B cell (primary cell): ENCODE measurements at regions of chr14 and their contacts with region 1.

Region 1: DNA sequence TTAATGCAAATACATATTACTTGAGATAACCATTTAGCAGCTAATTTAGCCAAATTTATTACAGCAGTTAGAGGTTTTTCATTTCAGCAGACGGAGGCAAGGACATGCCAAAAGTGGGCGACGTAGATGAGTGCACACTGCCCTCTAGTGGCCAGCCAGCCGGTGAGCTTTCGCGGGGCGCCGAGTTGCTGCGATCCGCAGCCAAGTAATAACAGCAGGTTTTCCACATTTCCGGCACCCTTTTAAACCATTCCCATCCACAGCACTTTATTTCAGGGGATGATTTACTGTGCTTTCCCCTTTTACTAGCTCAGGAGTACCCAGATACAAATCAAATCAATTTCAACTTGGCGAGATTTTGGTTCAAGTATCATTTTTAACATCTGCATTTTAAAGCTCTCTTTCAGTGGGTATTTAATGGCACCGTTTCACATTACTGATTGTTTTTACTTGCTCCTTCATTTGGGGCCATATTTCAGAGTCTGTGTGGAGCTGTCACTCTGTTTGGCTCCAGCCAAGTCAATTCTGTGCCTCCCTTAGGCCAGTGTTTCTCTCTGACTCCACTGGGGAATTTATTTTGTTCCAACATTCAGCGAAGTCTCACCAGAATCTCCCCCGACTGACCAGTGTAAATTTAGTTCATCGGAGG is 158.0 kb downstream of the EGLN3 start:
- DNase-seq: peak; percentile 53
- ATAC-seq: no peak
- H3K4me3 ChIP-seq: no peak overlapping the region
- H3K4me3 Mint-ChIP-seq: peak overlapping the region; percentile 21
- H3K27ac ChIP-seq: no peak overlapping the region
- H3K27ac Mint-ChIP-seq: no peak overlapping the region
- H3K4me1 ChIP-seq: peaks cover 4 to 8% of the 10 kb centered on the region in 2 donors
- H3K4me1 Mint-ChIP-seq: peaks cover 6% of the 10 kb centered on the region
- H3K27me3 ChIP-seq: peaks cover 0 to 20% (median 6%) of the 10 kb centered on the region in 4 experiments
- H3K27me3 Mint-ChIP-seq: peaks cover 36% of the 10 kb centered on the region
- CTCF ChIP-seq: peak; percentile 79

Region 2: DNA sequence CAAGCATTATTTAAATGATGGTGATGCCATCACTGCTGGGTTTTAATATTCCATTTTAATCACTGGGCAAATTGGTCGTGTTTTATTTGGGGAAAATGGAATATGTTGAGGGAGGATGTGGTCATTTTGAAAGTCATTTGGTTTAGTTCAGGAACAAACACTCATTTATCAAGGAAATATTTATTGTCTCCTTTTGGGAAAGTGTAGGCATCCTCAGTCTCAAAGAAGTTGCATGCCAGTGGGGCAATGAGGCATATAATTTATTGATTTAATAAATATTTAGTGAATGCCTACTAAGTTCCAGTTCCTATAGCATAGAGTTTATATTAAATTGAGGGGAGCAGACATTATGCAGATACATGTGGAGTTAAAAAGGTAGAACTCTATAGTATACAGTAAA is 719.8 kb before region 1 on chr14:
- CTCF ChIA-PET with region 1: no interaction called
- POLR2A ChIA-PET with region 1: no interaction called
- intact Hi-C with region 1: no loop called
- DNase-seq: no peak
- ATAC-seq: no peak
- H3K4me3 ChIP-seq: no peak overlapping the region
- H3K4me3 Mint-ChIP-seq: no peak overlapping the region
- H3K27ac ChIP-seq: no peak overlapping the region
- H3K27ac Mint-ChIP-seq: no peak overlapping the region
- H3K4me1 ChIP-seq: no peaks in the 10 kb centered on the region
- H3K4me1 Mint-ChIP-seq: no peaks in the 10 kb centered on the region
- H3K27me3 ChIP-seq: no peaks in the 10 kb centered on the region
- H3K27me3 Mint-ChIP-seq: no peaks in the 10 kb centered on the region
- CTCF ChIP-seq: no peak

Region 3: DNA sequence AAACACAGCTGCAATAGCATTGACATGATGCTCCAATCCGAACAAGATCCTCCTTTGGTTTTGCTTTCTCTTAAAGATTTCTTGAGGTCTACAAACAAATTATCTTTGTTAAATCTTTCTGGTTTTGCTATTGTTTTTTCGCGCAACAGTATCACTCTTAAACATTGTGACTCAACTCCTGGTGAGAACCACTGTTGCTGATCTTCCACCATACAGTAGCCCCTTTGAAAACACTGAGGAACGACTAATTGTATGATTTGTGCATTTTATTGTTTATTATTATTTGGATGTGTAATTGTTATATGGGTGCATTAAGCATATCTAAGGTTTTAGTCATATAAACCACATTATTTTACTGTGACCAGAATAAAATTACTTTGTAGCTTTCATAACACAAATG is 124.8 kb before region 1 on chr14:
- CTCF ChIA-PET with region 1: no interaction called
- POLR2A ChIA-PET with region 1: no interaction called
- intact Hi-C with region 1: no loop called
- DNase-seq: no peak
- ATAC-seq: no peak
- H3K4me3 ChIP-seq: no peak overlapping the region
- H3K4me3 Mint-ChIP-seq: no peak overlapping the region
- H3K27ac ChIP-seq: no peak overlapping the region
- H3K27ac Mint-ChIP-seq: no peak overlapping the region
- H3K4me1 ChIP-seq: no peaks in the 10 kb centered on the region
- H3K4me1 Mint-ChIP-seq: no peaks in the 10 kb centered on the region
- H3K27me3 ChIP-seq: no peaks in the 10 kb centered on the region
- H3K27me3 Mint-ChIP-seq: no peaks in the 10 kb centered on the region
- CTCF ChIP-seq: no peak

Region 4: GRCh38 chr14:33805593-33805992 is 12.7 kb after region 1 on chr14:
- CTCF ChIA-PET with region 1: interaction called, 10 read pairs
- POLR2A ChIA-PET with region 1: no interaction called
- intact Hi-C with region 1: no loop called
- DNase-seq: no peak
- ATAC-seq: no peak
- H3K4me3 ChIP-seq: no peak overlapping the region
- H3K4me3 Mint-ChIP-seq: no peak overlapping the region
- H3K27ac ChIP-seq: no peak overlapping the region
- H3K27ac Mint-ChIP-seq: no peak overlapping the region
- H3K4me1 ChIP-seq: no peaks in the 10 kb centered on the region
- H3K4me1 Mint-ChIP-seq: peaks cover 2% of the 10 kb centered on the region
- H3K27me3 ChIP-seq: peaks cover 0 to 6% (median 0%) of the 10 kb centered on the region in 4 experiments
- H3K27me3 Mint-ChIP-seq: peaks cover 20% of the 10 kb centered on the region
- CTCF ChIP-seq: no peak

Region 5: GRCh38 chr14:33914676-33915516 is 122.1 kb after region 1 on chr14:
- CTCF ChIA-PET with region 1: no interaction called
- POLR2A ChIA-PET with region 1: no interaction called
- intact Hi-C with region 1: no loop called
- DNase-seq: no peak
- ATAC-seq: no peak
- H3K4me3 ChIP-seq: no peak overlapping the region
- H3K4me3 Mint-ChIP-seq: no peak overlapping the region
- H3K27ac ChIP-seq: no peak overlapping the region
- H3K27ac Mint-ChIP-seq: no peak overlapping the region
- H3K4me1 ChIP-seq: no peaks in the 10 kb centered on the region
- H3K4me1 Mint-ChIP-seq: no peaks in the 10 kb centered on the region
- H3K27me3 ChIP-seq: no peaks in the 10 kb centered on the region
- H3K27me3 Mint-ChIP-seq: no peaks in the 10 kb centered on the region
- CTCF ChIP-seq: no peak